HepG2 (cell line): ENCODE measurements at regions of chr1 and their contacts with region 1.

Region 1: GRCh38 chr1:24027838-24028468 is 47.8 kb upstream of the SRSF10 start:
- DNase-seq: peak; percentile 60
- ATAC-seq: peak; percentile 67
- H3K4me3 ChIP-seq: no peak overlapping the region
- H3K27ac ChIP-seq: peak overlapping the region; percentile 19
- H3K4me1 ChIP-seq: peaks cover 59% of the 10 kb centered on the region
- H3K27me3 ChIP-seq: no peaks in the 10 kb centered on the region
- CTCF ChIP-seq: peak; percentile 73
- EP300 ChIP-seq: no peak
- POLR2A ChIP-seq: no peak
- RAD21 ChIP-seq: peak; percentile 64

Region 2: DNA sequence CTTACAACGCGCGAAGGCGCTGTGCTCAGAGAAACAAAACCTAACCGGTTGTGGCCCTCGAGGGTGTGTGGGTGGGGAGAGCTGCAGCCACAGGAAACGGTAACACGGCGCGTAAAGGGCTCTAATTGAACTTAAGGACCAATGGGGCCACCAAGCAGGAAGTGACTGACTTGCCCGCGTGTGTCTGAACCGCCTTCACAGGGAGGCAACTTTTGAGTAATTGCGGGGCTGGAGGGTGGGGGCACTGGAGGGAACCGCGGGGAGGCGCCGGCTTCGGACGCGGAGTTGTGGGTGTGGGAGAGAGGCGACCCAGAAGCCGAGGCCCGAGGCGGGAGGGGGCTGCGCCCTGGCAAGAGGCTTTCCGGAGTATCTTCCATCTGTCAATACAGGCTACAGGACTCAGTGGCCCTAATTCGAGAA is 68.9 kb before region 1 on chr1:
- CTCF ChIA-PET with region 1: interaction called, 6 read pairs
- POLR2A ChIA-PET with region 1: interaction called, 32 read pairs
- in situ Hi-C with region 1: no loop called
- intact Hi-C with region 1: loop called (anchors 5 kb)
- DNase-seq: peak; percentile 92
- ATAC-seq: peak; percentile 85
- H3K4me3 ChIP-seq: peak overlapping the region; percentile 62 to 89 (median 87)
- H3K27ac ChIP-seq: peak overlapping the region; percentile 99
- H3K4me1 ChIP-seq: peaks cover 47% of the 10 kb centered on the region
- H3K27me3 ChIP-seq: peaks cover 0 to 4% of the 10 kb centered on the region in 2 experiments; a peak in 1 of 5 replicates
- CTCF ChIP-seq: peak; percentile 71
- EP300 ChIP-seq: no peak
- POLR2A ChIP-seq: peak in 1 of 2 experiments; percentile 50; a peak in 2 of 4 replicates
- RAD21 ChIP-seq: 0 out of 2 replicates have a peak, but pooled peaks have one; percentile 14